ENCODE measurements at regions of chr11 and their contacts with region 1.

Region 1: GRCh38 chr11:64713031-64713780 is 9.8 kb downstream of the NRXN2 start:
- DNase-seq: no peak
- H3K4me3 ChIP-seq: peak overlapping the region; percentile 21 to 40
- H3K27ac ChIP-seq: no peak overlapping the region
- H3K4me1 ChIP-seq: peaks cover 0 to 3% of the 10 kb centered on the region in 2 donors
- H3K27me3 ChIP-seq: peaks cover 30% of the 10 kb centered on the region
- CTCF ChIP-seq: no peak

Region 2: GRCh38 chr11:64372802-64373597 is 340.2 kb before region 1 on chr11:
- intact Hi-C with region 1: loop called (anchors 10 kb)
- DNase-seq: no peak
- H3K4me3 ChIP-seq: no peak overlapping the region
- H3K27ac ChIP-seq: no peak overlapping the region
- H3K4me1 ChIP-seq: no peaks in the 10 kb centered on the region
- H3K27me3 ChIP-seq: no peaks in the 10 kb centered on the region
- CTCF ChIP-seq: no peak

Region 3: DNA sequence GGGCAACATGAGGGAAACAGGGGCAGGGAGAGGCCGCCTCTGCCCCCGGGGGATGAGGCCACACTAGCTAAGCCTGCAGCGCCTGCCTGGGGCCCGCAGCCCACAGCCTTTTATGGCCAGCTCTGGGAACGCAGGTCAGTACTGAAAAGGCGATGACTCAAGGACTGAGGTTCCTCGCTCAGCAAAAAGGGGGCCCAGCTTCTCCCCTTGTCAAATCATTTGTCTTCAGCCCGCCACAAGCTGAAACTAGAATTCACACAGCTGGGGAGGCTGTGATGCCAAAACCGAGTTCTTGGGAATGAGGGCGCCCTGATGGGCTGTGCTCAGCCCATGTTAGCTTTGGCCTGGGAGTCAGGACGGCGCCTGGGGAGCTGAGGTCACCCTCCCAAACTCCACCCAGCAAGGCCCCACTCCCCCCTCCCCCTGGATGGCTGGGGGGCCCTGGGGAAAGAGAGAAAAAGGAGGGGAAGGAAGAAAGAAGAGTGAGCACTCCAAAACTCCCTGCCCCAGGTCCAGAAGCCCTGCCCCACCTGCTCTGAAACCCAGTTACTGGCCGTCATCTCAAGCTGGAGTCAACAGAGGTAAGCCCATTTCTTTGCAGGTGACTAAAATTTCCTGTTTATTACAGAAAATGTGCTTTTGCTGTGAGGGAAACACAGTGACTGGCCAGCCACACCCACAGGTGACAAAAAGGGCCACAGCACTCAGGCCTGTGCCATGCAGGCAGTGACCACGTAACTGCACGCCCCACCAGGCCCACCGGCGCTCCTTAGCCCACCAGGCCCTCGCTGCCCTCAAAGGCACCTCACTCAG is 151.5 kb after region 1 on chr11:
- intact Hi-C with region 1: no loop called
- DNase-seq: peak; percentile 87 to 96
- H3K4me3 ChIP-seq: peak overlapping the region; percentile 37 to 59
- H3K27ac ChIP-seq: peak overlapping the region; percentile 97 to 98
- H3K4me1 ChIP-seq: peaks cover 47 to 76% of the 10 kb centered on the region in 2 donors
- H3K27me3 ChIP-seq: no peaks in the 10 kb centered on the region
- CTCF ChIP-seq: no peak

Region 4: DNA sequence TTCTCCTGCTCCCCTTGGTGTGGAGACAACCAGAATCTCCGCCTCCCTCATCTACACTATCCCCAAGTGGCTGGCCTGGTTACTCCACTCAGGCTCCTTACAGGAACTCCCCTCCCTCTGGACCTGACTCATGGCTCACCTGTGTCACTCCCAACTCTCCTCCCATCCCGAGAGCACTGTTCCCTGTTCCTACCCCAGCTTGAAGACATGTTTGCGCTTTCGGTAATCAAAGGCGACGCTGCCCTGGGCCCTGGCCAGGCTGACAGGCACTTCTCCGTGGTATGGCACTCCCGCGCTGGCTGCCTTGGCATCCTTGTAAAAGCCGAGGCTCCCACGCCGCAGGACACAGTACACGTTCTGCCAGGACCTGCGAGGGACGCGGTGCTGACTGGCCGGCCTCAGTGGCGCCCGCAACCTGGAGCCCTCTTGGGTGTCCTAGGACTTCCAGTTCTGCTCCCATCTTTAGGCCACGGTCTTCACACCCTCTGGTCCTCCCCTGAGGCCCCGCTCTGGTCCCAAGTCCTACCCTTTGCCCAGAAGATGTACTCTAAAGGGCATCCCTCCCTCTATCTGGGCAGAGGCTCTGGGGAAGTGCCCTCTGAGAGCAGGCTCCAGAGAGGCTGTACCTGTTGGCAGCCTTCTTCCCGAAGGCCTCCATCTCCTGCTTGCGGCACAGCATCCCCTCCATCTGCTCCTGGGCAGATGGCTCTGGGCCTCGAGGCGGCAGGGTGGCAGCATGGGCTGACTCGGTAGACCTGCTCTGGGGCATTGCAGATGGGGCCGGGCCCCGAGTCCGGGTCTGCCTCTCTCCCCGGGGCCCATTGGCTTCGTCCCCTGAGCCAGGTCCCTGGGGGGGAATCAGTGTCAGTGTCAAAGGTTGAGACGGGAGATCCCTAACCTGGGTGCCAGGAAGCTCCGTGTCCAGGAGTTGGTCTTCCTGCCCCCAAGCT is 1973.9 kb after region 1 on chr11:
- intact Hi-C with region 1: no loop called
- DNase-seq: no peak
- H3K4me3 ChIP-seq: no peak overlapping the region
- H3K27ac ChIP-seq: no peak overlapping the region
- H3K4me1 ChIP-seq: no peaks in the 10 kb centered on the region
- H3K27me3 ChIP-seq: no peaks in the 10 kb centered on the region
- CTCF ChIP-seq: no peak

Measured in ascending aorta (tissue), 2 donors.